ENCODE measurements at regions of chr1 and their contacts with region 1.

Region 1: GRCh38 chr1:156689035-156689952 is 12.1 kb upstream of the NES start:
- ATAC-seq: peak; percentile 81 to 96 (median 89)
- H3K4me3 ChIP-seq: peak overlapping the region; percentile 11 to 24 (median 16)
- H3K27ac ChIP-seq: peak overlapping the region in 1 of 2 donors; percentile 56
- H3K4me1 ChIP-seq: peaks cover 52 to 54% of the 10 kb centered on the region in 2 donors

Region 2: GRCh38 chr1:156721535-156721934 is 32.2 kb after region 1 on chr1:
- in situ Hi-C with region 1: loop called in 1 of 9 experiments (anchors 5 kb)
- ATAC-seq: no peak
- H3K4me3 ChIP-seq: no peak overlapping the region
- H3K27ac ChIP-seq: no peak overlapping the region
- H3K4me1 ChIP-seq: peaks cover 15 to 16% of the 10 kb centered on the region in 2 donors

Region 3: GRCh38 chr1:156860113-156860627 is 170.9 kb after region 1 on chr1:
- in situ Hi-C with region 1: loop called in 2 of 9 experiments (anchors 25 kb)
- ATAC-seq: peak; percentile 59 to 76 (median 74)
- H3K4me3 ChIP-seq: peak overlapping the region; percentile 11 to 34 (median 23)
- H3K27ac ChIP-seq: peak overlapping the region in 1 of 2 donors; percentile 5
- H3K4me1 ChIP-seq: peaks cover 35 to 63% of the 10 kb centered on the region in 2 donors